ENCODE measurements at regions of chr14 and their contacts with region 1.

Region 1: GRCh38 chr14:58244556-58245387 is at the start of gene PSMA3:
- DNase-seq: peak; percentile 96 to 99 (median 97)
- ATAC-seq: peak; percentile 89
- H3K4me3 ChIP-seq: peak within 1 kb of the TSS; percentile 72
- H3K4me3 Mint-ChIP-seq: peak within 1 kb of the TSS; percentile 99
- H3K27ac ChIP-seq: peak within 1 kb of the TSS; percentile 93 to 96
- H3K27ac Mint-ChIP-seq: peak within 1 kb of the TSS; percentile 99
- H3K4me1 ChIP-seq: peaks cover 12% of the 10 kb centered on the region
- H3K4me1 Mint-ChIP-seq: peaks cover 52% of the 10 kb centered on the region
- H3K27me3 ChIP-seq: no peaks in the 10 kb centered on the region
- H3K27me3 Mint-ChIP-seq: no peaks in the 10 kb centered on the region
- CTCF ChIP-seq: no peak
- total RNA-seq, gene PSMA3: 104 to 108 TPM

Region 2: DNA sequence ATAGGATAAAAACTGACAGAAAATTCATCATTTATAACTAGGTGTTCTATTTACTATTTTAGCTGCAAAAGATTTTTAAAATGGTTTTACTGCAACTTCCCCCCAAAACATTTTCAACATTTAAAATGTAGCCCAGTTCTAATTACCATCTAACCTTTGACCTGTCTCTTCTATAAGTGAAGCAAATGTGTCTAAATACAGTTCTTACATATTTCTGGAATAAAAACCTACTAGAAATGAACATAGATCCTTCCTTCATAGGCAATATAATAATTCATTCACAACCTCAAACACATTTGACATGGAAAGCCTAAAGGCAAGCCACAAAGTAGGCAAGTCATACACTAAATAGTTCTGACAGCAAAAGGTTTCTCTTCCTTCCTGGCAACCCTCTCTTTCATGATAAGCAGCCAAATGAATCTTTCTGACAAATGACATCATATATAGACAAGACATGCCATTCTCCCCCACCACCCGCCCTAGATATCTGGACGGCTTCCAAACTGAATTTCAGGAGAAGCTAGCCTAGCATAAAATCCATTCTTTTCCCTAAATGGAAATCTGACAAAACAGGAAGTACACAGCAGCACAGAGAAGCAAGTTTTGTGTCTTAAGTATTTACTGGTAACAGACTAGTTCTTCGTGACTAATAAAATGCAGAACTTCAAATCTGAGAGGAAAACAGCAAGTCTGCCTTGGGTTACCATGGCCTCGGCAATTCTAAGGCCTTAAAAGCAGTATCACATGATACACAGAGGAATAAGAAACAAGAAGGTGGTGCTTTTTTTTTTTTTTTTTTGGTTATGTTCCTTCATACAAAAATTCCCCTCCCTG is 36.4 kb after region 1 on chr14:
- CTCF ChIA-PET with region 1: no interaction called
- POLR2A ChIA-PET with region 1: interaction called, 9 read pairs
- intact Hi-C with region 1: loop called in 1 of 2 experiments (anchors 5 kb)
- DNase-seq: peak in 8 of 14 experiments; percentile 5 to 74 (median 32)
- ATAC-seq: peak; percentile 86
- H3K4me3 ChIP-seq: no peak overlapping the region
- H3K4me3 Mint-ChIP-seq: peak overlapping the region; percentile 71
- H3K27ac ChIP-seq: peak overlapping the region; percentile 51 to 73
- H3K27ac Mint-ChIP-seq: peak overlapping the region; percentile 92
- H3K4me1 ChIP-seq: peaks cover 25% of the 10 kb centered on the region
- H3K4me1 Mint-ChIP-seq: peaks cover 67% of the 10 kb centered on the region
- H3K27me3 ChIP-seq: no peaks in the 10 kb centered on the region
- H3K27me3 Mint-ChIP-seq: no peaks in the 10 kb centered on the region
- CTCF ChIP-seq: no peak

Region 3: DNA sequence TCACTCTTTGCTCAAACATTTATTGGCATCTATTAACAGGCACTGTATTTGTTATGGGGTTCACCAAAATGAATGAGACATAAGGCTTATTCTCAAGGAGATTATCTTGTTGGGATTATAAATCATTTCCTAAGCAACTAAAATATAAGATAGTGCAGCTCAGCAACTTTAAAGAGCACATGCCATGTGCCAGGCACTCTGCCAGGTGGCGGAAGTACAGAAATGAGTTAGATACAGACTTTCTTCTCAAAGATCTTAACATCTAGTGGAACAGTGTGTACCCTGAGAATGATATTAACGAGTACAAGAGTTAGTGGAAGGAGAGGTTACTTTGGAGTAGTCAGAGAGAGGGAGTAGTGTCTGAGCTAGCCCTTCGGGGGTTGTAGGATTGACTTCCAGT is 122.5 kb after region 1 on chr14:
- CTCF ChIA-PET with region 1: no interaction called
- POLR2A ChIA-PET with region 1: no interaction called
- intact Hi-C with region 1: no loop called
- DNase-seq: no peak
- ATAC-seq: no peak
- H3K4me3 ChIP-seq: no peak overlapping the region
- H3K4me3 Mint-ChIP-seq: no peak overlapping the region
- H3K27ac ChIP-seq: no peak overlapping the region
- H3K27ac Mint-ChIP-seq: no peak overlapping the region
- H3K4me1 ChIP-seq: no peaks in the 10 kb centered on the region
- H3K4me1 Mint-ChIP-seq: no peaks in the 10 kb centered on the region
- H3K27me3 ChIP-seq: no peaks in the 10 kb centered on the region
- H3K27me3 Mint-ChIP-seq: no peaks in the 10 kb centered on the region
- CTCF ChIP-seq: no peak

Region 4: DNA sequence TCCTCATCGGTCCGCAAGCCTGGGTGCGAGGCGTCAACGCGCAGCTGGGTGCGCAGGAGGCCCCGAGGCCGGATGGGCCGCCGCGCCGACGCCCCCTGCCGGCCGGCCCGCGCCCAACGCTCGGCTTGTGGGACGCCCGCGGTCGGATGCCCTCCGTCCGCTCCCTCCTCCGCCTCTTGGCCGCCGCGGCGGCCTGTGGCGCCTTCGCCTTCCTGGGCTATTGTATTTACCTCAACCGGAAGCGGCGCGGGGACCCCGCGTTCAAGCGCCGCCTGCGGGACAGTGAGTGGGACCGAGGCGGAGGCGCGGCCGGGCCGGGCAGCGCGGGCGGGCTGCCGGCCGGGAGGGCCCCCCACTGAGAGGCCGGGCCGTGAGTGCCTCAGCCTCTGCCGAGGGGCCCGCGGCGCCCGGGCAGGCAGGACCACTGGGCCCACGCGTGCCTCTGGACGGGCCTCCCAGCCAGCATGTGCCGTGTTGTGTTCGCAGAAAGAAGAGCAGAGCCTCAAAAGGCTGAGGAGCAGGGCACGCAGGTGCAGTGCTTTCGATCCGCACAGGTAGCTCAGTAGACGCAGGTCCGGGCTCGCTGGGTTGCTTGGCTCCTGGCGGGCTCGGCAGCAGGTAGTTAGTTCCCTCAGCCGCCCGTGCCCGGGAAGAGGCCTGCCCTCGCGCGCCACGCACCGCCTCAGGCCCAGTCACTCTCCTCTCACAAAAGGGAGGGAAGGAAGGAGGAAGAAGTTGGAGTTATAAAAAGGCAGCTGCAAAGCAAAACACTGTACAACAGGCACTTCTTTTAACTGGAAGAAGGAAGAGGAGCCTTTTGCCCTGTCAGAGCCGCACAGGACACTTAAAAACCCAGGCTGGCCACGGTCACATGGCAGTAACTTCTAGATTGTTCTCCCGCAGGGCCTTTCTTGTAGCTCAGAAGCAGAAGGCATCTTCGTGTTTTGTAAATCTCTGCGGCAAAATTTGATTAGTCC is 151.3 kb after region 1 on chr14 and contains the start of gene TOMM20L:
- CTCF ChIA-PET with region 1: interaction called, 3 read pairs
- POLR2A ChIA-PET with region 1: interaction called, 11 read pairs
- intact Hi-C with region 1: no loop called
- DNase-seq: peak; percentile 48 to 88 (median 66)
- ATAC-seq: peak; percentile 77
- H3K4me3 ChIP-seq: peak within 1 kb of the TSS; percentile 71
- H3K4me3 Mint-ChIP-seq: peak within 1 kb of the TSS; percentile 88
- H3K27ac ChIP-seq: peak within 1 kb of the TSS; percentile 69 to 75
- H3K27ac Mint-ChIP-seq: peak within 1 kb of the TSS; percentile 85
- H3K4me1 ChIP-seq: peaks cover 13% of the 10 kb centered on the region
- H3K4me1 Mint-ChIP-seq: peaks cover 12% of the 10 kb centered on the region
- H3K27me3 ChIP-seq: no peaks in the 10 kb centered on the region
- H3K27me3 Mint-ChIP-seq: no peaks in the 10 kb centered on the region
- CTCF ChIP-seq: peak; percentile 80
- total RNA-seq, gene TOMM20L: 0.56 TPM in 1 of 2 experiments, not detected in the other

Measured in CD4-positive, alpha-beta T cell (primary cell).